Activated CD4-positive, alpha-beta T cell treated with anti-CD3 and anti-CD28 coated beads for 36 hours (primary cell): ENCODE measurements at regions of chr6 and their contacts with region 1.

Region 1: DNA sequence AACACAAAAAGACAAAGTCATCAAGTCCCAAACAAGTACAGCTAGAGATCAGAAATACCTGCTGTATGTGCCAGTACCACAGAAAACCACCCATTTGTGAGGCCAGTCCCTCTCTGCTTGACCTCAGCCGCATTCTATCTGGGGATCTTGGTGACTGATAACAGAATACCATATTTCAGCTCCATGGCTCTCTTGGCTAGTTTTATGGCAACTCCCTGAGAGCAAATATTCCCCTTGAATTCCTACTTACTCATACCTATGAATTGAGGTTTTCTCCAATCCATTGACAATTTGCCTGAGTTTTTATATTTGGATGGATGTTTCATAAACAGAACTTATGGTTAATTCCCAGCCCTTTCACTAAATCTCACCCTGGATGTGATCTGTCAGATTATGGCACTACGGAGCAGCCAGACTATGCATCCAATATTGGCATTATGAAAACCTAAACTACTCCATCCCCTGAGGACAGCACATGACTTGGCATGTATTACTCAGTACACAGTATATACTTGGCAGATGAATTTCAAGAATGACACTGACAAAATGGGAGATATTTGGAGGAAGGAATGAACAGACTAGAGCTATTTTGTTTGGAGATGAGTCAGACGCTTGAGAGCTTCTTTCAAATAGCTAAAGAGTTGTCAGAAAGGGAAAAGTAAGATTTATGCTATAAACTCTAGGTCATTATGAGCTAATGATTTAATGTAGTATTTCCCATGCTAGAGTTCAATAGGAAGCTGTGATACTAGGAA is 95.7 kb downstream of the PRDM1 start:
- DNase-seq: no peak
- ATAC-seq: peak; percentile 64
- H3K4me3 Mint-ChIP-seq: no peak overlapping the region
- H3K27ac Mint-ChIP-seq: peak overlapping the region; percentile 44
- H3K4me1 Mint-ChIP-seq: peaks cover 48% of the 10 kb centered on the region
- H3K27me3 Mint-ChIP-seq: peaks cover 4% of the 10 kb centered on the region

Region 2: GRCh38 chr6:106194949-106195921 is 13.4 kb after region 1 on chr6:
- CTCF ChIA-PET with region 1: interaction called, 15 read pairs
- POLR2A ChIA-PET with region 1: interaction called, 5 read pairs
- intact Hi-C with region 1: no loop called
- DNase-seq: no peak
- ATAC-seq: peak; percentile 92
- H3K4me3 Mint-ChIP-seq: peak overlapping the region; percentile 37
- H3K27ac Mint-ChIP-seq: peak overlapping the region; percentile 79
- H3K4me1 Mint-ChIP-seq: peaks cover 44% of the 10 kb centered on the region
- H3K27me3 Mint-ChIP-seq: no peaks in the 10 kb centered on the region